BJ (cell line): ENCODE measurements at regions of chr20 and their contacts with region 1.

Region 1: DNA sequence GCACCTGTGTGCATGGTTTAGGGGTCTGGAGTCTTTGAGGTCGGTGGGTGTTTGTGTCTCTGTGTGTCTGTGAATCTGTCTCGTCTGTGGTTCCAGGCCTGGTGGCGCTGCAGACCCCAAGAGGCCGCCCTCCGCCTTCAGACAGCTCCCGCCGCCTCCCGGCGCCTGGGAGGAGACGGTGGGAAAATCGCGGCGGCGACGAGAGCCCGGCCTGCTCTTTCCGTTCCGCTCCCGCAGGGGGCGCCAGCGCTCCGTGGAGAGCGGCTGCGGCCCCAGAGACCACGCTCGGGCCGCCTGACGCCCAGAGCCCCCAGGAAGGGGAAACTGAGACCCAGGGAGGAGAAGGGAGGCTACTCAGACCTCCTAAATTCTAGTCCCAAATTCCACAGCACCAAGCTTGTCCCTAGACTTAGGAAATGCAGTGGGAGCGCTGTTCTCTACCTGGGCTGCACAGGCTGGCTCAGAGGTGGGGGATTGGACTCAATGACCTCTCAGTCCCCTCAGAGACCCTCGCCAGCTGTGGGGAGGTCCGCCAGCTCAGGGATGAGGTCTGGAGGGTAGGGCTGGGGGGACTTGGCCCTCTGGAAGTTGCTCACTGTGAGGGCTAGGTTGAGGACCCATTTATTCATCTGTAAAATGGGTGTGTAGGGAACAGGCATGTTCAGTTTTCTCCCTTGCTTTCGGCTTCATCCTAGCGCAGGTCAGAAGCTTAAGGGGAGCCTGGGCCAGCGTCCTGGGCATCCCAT is 36.9 kb upstream of the BLCAP start:
- DNase-seq: no peak
- H3K4me3 ChIP-seq: no peak overlapping the region
- H3K27me3 ChIP-seq: peaks cover 24% of the 10 kb centered on the region
- CTCF ChIP-seq: peak; percentile 95

Region 2: GRCh38 chr20:37575884-37576283 is 11.3 kb after region 1 on chr20:
- CTCF ChIA-PET with region 1: interaction called, 17 read pairs
- POLR2A ChIA-PET with region 1: no interaction called
- DNase-seq: no peak
- H3K4me3 ChIP-seq: no peak overlapping the region
- H3K27me3 ChIP-seq: no peaks in the 10 kb centered on the region; the same call in 1 of the 2 replicates
- CTCF ChIP-seq: no peak

Region 3: DNA sequence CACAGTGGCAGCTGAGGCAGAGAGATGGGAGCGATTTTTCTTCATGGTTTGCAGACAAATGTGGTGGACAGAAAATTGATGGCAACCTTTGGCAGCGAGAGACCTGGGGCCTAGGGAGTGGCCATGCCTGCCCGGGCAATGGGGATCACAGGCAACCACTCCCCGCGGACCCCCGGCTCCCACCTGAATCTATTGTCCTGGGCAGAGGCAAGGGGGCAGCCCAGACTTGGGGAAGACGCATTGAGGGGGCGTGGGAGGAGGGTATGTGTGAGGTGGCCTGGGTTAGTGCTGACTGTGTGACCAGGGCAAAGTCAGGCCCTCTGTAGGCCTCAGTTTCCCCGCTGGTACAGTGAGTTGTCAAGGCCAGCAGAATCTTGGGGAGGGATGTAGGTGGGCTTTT is 16.7 kb after region 1 on chr20:
- CTCF ChIA-PET with region 1: interaction called, 17 read pairs
- POLR2A ChIA-PET with region 1: no interaction called
- DNase-seq: no peak
- H3K4me3 ChIP-seq: no peak overlapping the region
- H3K27me3 ChIP-seq: peaks cover 4% of the 10 kb centered on the region; the same call in 1 of the 2 replicates
- CTCF ChIP-seq: no peak

Region 4: DNA sequence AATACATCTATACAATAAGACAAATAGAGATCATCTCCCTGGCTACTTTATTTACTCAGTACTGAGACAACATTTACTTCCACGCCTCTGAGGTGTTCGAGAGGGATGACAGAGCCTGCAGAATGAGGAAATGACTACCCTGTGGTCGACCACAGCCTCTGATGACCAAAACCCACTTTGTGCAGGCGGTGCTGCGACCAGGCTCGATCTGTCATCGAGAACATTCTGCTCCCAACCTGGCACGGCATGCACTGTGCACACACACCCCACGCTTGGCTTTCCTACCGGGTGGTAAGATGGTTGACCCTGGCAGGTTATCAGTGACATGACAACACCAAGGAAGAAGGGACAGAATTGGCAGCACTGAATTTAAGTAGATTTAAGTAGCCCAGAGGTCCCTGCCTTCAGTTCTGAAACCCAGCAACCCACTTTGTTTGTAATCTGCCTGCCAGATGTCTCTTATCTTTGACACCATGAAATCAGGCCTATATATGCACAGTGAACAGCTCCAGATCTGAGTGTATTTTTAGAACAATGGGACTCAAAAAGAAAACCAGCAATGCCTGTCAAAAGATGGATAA is 426.1 kb after region 1 on chr20:
- CTCF ChIA-PET with region 1: interaction called, 50 read pairs
- POLR2A ChIA-PET with region 1: no interaction called
- DNase-seq: peak; percentile 19
- H3K4me3 ChIP-seq: no peak overlapping the region
- H3K27me3 ChIP-seq: no peaks in the 10 kb centered on the region
- CTCF ChIP-seq: no peak

Region 5: DNA sequence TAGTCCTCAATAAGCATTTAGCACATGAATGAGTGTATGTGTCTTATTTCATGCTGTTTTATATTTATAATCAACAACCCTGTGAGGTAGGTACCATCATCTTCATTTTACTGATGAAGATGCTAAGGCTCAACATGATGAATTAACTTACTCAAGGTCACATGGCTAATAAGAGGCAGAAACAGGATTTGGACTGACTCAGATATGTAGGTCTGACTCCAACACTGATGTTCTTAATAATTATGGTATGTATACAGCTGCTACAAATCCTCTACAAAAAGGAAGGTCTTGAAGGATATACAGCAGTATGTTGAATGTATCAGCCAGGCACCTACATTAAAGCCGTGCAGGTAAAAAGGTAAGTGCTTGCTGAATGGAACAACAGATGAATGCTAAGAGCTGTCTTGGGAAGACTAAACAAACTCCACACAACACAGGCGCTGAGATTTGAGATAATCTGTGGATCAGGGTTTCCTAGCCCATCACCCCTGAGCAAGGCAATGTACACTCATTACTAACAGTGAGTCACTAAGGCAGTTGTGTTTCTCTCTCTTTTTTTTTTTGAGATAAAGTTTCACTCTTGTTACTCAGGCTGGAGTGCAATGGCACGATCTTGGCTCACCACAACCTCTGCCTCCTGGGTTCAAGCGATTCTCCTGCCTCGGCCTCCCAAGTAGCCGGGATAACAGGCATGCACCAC is 436.8 kb after region 1 on chr20:
- CTCF ChIA-PET with region 1: interaction called, 20 read pairs
- POLR2A ChIA-PET with region 1: no interaction called
- DNase-seq: no peak
- H3K4me3 ChIP-seq: no peak overlapping the region
- H3K27me3 ChIP-seq: no peaks in the 10 kb centered on the region
- CTCF ChIP-seq: no peak